HCT116 (cell line): ENCODE measurements at regions of chr7 and their contacts with region 1.

Region 1: DNA sequence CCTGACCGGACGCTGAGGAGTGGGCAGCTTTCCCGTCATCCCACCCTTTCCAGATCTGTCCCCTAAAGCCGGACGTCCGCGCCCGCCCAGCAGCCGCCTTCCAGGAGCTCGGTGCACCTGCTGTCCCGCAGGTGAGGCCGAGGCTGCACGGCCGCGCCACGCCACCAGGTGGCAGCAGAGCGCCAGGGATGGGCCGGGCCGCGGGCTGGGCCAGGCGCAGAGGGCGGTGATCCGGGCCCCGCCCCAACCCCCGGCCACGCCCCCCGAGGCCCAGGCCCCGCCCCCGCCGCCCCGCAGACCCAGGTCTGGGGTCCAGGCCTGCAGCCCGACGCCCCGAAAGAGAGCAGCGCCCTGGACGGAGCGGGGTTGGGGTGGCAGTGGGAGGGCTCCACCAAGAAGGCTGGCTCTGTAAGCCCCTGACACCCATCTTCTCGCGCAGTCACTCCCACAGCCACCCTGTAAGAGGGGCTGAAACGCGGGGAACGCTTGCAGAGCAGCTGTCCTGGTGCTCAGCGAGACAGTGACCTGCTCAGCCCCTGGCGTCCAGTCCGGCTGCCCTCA is 32.2 kb downstream of the FOXL3 start:
- DNase-seq: peak; percentile 32
- ATAC-seq: peak; percentile 99
- H3K4me3 ChIP-seq: no peak overlapping the region
- H3K27ac ChIP-seq: no peak overlapping the region
- H3K4me1 ChIP-seq: no peaks in the 10 kb centered on the region
- H3K27me3 ChIP-seq: no peaks in the 10 kb centered on the region; the same call in 1 of the 2 replicates
- CTCF ChIP-seq: peak; percentile 60 to 83 (median 70)
- POLR2A ChIP-seq: no peak
- RAD21 ChIP-seq: peak; percentile 93

Region 2: DNA sequence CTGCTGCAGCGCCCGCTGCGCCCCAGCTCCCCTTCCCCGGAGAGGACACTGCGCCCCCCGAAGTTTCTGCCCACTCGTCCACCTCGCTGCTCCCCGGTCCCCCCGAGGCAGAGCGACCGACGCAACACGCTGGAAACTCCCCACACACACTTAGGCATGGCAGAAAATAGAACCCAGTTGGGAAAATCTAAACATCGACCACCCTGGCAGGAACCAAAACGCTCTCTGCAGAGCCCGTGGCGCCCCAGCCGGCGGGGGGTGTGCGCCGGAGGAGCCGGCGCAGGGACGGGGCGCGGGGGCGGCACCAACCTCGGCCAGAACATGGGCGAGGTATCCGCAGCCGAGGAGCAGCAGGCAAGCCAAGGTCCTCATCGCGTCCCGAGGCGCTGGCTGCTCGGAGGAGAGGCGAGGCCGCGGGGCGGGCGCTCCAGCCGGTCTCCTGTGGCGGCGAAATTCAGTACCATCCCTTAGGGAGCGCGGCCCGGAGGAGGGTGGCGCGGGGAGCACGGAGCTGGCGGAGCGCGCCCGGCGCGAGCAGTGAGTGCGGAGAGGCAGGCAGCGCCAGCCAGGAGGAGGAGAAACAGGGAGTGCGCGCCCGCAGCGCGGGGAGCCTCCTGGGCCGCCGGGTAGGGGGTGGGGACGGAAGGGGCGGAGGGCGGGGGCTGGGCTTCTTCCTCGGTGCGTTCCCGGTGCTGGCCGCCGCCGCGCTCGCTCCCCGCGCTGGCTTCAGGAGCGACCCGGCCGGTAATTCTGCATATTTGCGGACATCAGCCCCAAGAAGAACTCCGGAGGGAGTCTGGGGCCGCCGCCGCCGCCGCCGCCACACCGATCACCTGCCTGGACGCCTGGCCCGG is 196.7 kb after region 1 on chr7:
- CTCF ChIA-PET with region 1: no interaction called
- POLR2A ChIA-PET with region 1: interaction called, 4 read pairs
- RAD21 ChIA-PET with region 1: no interaction called
- intact Hi-C with region 1: loop called (anchors 10 kb)
- DNase-seq: no peak
- ATAC-seq: peak; percentile 61
- H3K4me3 ChIP-seq: peak overlapping the region; percentile 52 to 94
- H3K27ac ChIP-seq: peak overlapping the region; percentile 83
- H3K4me1 ChIP-seq: peaks cover 25 to 56% of the 10 kb centered on the region in 2 experiments
- H3K27me3 ChIP-seq: no peaks in the 10 kb centered on the region
- CTCF ChIP-seq: no peak
- POLR2A ChIP-seq: no peak
- RAD21 ChIP-seq: no peak

Region 3: DNA sequence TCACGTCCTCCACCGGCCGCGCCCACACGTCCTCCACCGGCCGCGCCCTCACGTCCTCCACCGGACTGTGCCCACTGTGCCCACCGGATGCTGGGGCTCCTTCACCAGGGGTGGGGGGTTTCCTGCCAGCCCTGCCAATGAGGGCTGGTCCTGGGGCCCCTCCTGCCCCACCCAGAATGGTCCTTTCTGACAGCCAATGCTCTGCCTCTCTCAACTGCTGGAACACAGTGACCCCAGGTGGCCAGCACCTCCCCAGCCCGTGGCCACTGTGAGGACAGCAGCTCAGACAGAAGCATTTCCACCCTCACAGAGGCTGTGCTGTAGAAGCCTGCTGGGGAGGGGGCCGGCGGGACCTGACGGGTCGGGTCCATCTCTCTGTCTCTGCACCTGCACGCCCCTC is 314.2 kb after region 1 on chr7:
- CTCF ChIA-PET with region 1: interaction called, 14 read pairs
- POLR2A ChIA-PET with region 1: no interaction called
- RAD21 ChIA-PET with region 1: interaction called, 4 to 5 read pairs
- intact Hi-C with region 1: loop called (anchors 2 kb)
- DNase-seq: peak; percentile 65
- ATAC-seq: peak; percentile 77
- H3K4me3 ChIP-seq: peak overlapping the region; percentile 44 to 54
- H3K27ac ChIP-seq: peak overlapping the region; percentile 67
- H3K4me1 ChIP-seq: peaks cover 21 to 40% of the 10 kb centered on the region in 2 experiments
- H3K27me3 ChIP-seq: no peaks in the 10 kb centered on the region
- CTCF ChIP-seq: peak in 2 of 3 experiments; percentile 70 to 80; a peak in 4 of 6 replicates
- POLR2A ChIP-seq: no peak
- RAD21 ChIP-seq: no peak

Region 4: GRCh38 chr7:774161-775109 is 452.2 kb after region 1 on chr7:
- CTCF ChIA-PET with region 1: interaction called, 9 read pairs
- POLR2A ChIA-PET with region 1: no interaction called
- RAD21 ChIA-PET with region 1: no interaction called
- intact Hi-C with region 1: loop called (anchors 2 kb)
- DNase-seq: peak; percentile 7
- ATAC-seq: peak; percentile 90
- H3K4me3 ChIP-seq: no peak overlapping the region
- H3K27ac ChIP-seq: no peak overlapping the region
- H3K4me1 ChIP-seq: no peaks in the 10 kb centered on the region
- H3K27me3 ChIP-seq: no peaks in the 10 kb centered on the region
- CTCF ChIP-seq: peak; percentile 86 to 94 (median 86)
- POLR2A ChIP-seq: no peak
- RAD21 ChIP-seq: peak; percentile 94

Region 5: DNA sequence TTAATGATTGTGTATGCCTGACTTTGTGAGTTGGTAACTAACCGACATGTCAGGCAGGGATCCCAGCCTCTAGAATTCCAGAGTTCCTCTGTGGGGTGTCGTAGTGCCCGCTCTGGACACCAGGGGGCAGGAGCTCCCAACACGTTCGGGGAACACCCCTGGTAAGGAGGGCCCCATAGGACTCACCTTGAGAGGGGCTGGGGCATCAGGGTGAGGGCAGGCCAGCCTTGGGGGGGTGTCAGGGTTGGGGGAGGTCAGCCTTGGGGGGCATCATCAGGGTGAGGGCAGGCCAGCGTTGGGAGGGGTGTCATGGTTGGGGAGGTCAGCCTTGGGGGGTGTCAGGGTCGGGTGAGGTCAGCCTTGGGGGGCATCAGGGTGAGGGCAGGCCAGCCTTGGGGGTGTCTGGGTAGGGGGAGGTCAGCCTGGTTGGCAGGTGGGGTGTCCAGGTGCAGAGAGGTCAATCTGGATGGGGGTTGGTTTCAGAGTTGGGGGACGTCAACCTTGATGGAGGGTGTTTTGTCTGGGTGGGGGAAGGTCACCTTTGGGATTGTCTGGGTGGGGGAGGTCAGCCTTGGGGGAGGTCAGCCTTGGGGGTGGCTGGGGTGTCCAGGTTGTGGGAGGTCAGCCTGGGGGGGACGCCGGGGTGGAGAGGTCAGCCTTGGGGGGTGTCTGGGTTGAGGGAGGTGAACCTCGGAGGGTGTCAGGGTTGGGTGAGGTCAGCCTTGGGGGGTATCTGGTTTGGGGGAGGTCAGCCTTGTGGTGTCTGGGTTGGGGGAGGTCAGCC is 464.5 kb after region 1 on chr7:
- CTCF ChIA-PET with region 1: no interaction called
- POLR2A ChIA-PET with region 1: no interaction called
- RAD21 ChIA-PET with region 1: no interaction called
- intact Hi-C with region 1: loop called (anchors 5 kb)
- DNase-seq: peak; percentile 18
- ATAC-seq: peak; percentile 92
- H3K4me3 ChIP-seq: no peak overlapping the region
- H3K27ac ChIP-seq: no peak overlapping the region
- H3K4me1 ChIP-seq: no peaks in the 10 kb centered on the region
- H3K27me3 ChIP-seq: no peaks in the 10 kb centered on the region
- CTCF ChIP-seq: peak; percentile 88 to 91 (median 90)
- POLR2A ChIP-seq: no peak
- RAD21 ChIP-seq: peak; percentile 95

Region 6: GRCh38 chr7:873367-874002 is 551.3 kb after region 1 on chr7:
- CTCF ChIA-PET with region 1: interaction called, 6 read pairs
- POLR2A ChIA-PET with region 1: no interaction called
- RAD21 ChIA-PET with region 1: no interaction called
- intact Hi-C with region 1: loop called (anchors 5 kb)
- DNase-seq: peak; percentile 72
- ATAC-seq: peak; percentile 43
- H3K4me3 ChIP-seq: no peak overlapping the region
- H3K27ac ChIP-seq: peak overlapping the region; percentile 36
- H3K4me1 ChIP-seq: peaks cover 10 to 26% of the 10 kb centered on the region in 2 experiments; a peak in 3 of 4 replicates
- H3K27me3 ChIP-seq: no peaks in the 10 kb centered on the region
- CTCF ChIP-seq: peak in 2 of 3 experiments; percentile 96 to 99; a peak in 4 of 6 replicates
- POLR2A ChIP-seq: no peak
- RAD21 ChIP-seq: no peak